MCF 10A (cell line): ENCODE measurements at regions of chr19 and their contacts with region 1.

Region 1: GRCh38 chr19:9018163-9018875 is 8.1 kb upstream of the MUC16 start:
- DNase-seq: peak; percentile 27
- H3K4me3 Mint-ChIP-seq: peak overlapping the region; percentile 68
- H3K27ac Mint-ChIP-seq: peak overlapping the region; percentile 87
- H3K4me1 Mint-ChIP-seq: peaks cover 10% of the 10 kb centered on the region
- H3K27me3 Mint-ChIP-seq: no peaks in the 10 kb centered on the region
- CTCF ChIP-seq: no peak

Region 2: DNA sequence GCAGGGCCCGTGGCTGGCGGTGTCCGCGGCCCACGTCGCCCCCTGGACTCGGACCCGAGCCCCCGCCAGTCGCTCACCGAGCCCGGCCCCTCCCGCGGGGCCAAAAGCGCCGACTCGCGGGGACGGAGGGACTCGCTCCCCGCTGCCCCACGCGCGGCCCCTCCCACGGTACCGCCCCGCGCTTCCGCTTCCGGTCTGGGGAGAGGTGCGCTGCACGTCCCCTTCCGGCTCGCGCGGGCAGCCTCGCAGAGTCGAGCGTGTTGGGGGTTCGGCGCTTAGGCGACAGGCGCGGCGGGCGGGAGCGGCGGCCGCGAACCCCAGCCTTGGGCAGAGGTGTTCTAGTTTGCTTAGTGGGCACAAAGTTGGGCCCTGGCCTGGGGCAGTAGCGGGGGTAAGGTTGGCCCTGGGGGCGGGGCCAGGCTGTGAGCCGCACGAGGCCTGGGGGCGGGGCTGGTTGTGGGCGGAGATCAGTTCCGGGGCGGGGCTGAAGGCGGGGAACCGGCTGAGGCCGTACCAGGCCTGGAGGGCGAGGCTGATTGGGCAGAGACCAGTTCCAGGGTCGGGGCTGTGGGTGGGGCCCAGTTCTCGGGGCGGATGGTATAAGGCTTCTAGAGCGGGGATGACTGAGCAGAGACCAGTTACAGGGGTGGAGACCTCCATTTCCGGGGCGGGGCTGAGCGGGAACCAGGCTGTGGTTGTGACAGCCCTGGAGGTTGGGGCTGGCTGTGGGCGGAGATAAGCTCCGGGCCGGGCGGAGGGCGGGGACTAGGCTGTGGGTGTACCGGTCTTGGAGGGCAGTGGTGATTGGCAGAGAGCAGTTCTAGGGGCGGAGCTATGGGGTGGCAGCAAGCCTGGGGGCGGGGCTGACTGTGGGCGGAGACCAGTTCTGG is 185.9 kb before region 1 on chr19 and contains the starts of genes MBD3L1 and ZNF558:
- CTCF ChIA-PET with region 1: no interaction called
- POLR2A ChIA-PET with region 1: interaction called, 3 read pairs
- intact Hi-C with region 1: loop called (anchors 1 kb)
- DNase-seq: peak; percentile 98
- H3K4me3 Mint-ChIP-seq: peak within 1 kb of the TSS; percentile 82
- H3K27ac Mint-ChIP-seq: peak within 1 kb of the TSS; percentile 97
- H3K4me1 Mint-ChIP-seq: peaks cover 5% of the 10 kb centered on the region
- H3K27me3 Mint-ChIP-seq: no peaks in the 10 kb centered on the region
- CTCF ChIP-seq: no peak
- total RNA-seq, gene MBD3L1: not detected in 2 replicates
- total RNA-seq, gene ZNF558: 34.1 and 36.5 TPM in 2 replicates

Region 3: DNA sequence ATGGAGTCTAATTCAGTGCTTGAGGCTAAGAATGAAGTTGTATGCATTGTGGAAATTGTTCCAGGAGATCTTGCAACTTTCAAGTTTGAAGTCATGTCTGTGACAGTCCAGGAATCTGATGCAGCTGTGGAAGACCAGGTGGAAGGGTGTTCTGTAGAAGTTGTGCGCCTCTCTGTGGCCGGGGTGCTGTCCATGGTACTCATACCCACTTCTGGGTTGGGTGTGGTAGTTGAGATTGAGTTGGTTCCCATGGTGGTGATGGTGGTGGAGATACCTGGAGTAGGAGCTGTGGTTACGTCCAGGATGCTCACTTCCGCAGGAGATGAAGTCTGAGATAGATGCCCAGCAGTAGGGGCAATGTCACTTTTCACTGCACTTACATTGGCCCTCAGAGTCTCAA is 52.4 kb before region 1 on chr19:
- CTCF ChIA-PET with region 1: no interaction called
- POLR2A ChIA-PET with region 1: no interaction called
- intact Hi-C with region 1: no loop called
- DNase-seq: no peak
- H3K4me3 Mint-ChIP-seq: no peak overlapping the region
- H3K27ac Mint-ChIP-seq: no peak overlapping the region
- H3K4me1 Mint-ChIP-seq: no peaks in the 10 kb centered on the region
- H3K27me3 Mint-ChIP-seq: no peaks in the 10 kb centered on the region
- CTCF ChIP-seq: no peak